ENCODE measurements at regions of chr17 and their contacts with region 1.

Region 1: GRCh38 chr17:20226814-20227482 is 217.8 kb downstream of the SPECC1 start:
- DNase-seq: peak; percentile 91
- ATAC-seq: peak; percentile 96
- H3K4me3 Mint-ChIP-seq: no peak overlapping the region
- H3K27ac Mint-ChIP-seq: peak overlapping the region; percentile 28
- H3K4me1 Mint-ChIP-seq: peaks cover 68% of the 10 kb centered on the region
- H3K27me3 Mint-ChIP-seq: no peaks in the 10 kb centered on the region
- CTCF ChIP-seq: peak; percentile 92

Region 2: GRCh38 chr17:20216154-20216815 is 10.7 kb before region 1 on chr17:
- CTCF ChIA-PET with region 1: interaction called, 15 read pairs
- POLR2A ChIA-PET with region 1: no interaction called
- DNase-seq: no peak
- ATAC-seq: peak; percentile 12
- H3K4me3 Mint-ChIP-seq: no peak overlapping the region
- H3K27ac Mint-ChIP-seq: peak overlapping the region; percentile 51
- H3K4me1 Mint-ChIP-seq: peaks cover 69% of the 10 kb centered on the region
- H3K27me3 Mint-ChIP-seq: no peaks in the 10 kb centered on the region; the same call in 1 of the 2 replicates
- CTCF ChIP-seq: no peak

Region 3: GRCh38 chr17:20262226-20263114 is 35.5 kb after region 1 on chr17:
- CTCF ChIA-PET with region 1: interaction called, 11 read pairs
- POLR2A ChIA-PET with region 1: no interaction called
- DNase-seq: no peak
- ATAC-seq: no peak
- H3K4me3 Mint-ChIP-seq: no peak overlapping the region
- H3K27ac Mint-ChIP-seq: peak overlapping the region; percentile 83
- H3K4me1 Mint-ChIP-seq: peaks cover 23% of the 10 kb centered on the region
- H3K27me3 Mint-ChIP-seq: no peaks in the 10 kb centered on the region
- CTCF ChIP-seq: no peak

Region 4: DNA sequence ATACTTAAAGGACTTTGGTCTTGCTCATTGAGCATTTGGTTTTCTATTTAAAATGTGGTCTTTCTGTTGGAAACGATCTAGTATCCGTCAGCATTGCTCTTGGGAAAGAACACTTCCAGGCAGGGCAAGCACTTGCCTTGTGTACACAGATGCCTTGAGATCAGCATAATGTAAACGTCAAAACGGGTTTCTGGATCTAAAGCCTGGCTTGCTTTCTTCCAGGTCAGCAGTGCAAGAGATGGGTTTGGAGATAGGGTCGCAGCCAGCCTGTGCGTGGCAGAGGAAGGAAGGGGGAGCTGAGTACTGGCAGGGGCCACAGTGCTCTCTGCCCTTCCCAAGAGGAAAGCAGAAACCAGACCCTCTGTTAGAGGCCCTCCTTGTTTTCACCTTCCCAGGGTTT is 64.9 kb after region 1 on chr17:
- CTCF ChIA-PET with region 1: no interaction called
- POLR2A ChIA-PET with region 1: no interaction called
- DNase-seq: no peak
- ATAC-seq: no peak
- H3K4me3 Mint-ChIP-seq: no peak overlapping the region
- H3K27ac Mint-ChIP-seq: no peak overlapping the region; the same call in 1 of the 2 replicates
- H3K4me1 Mint-ChIP-seq: no peaks in the 10 kb centered on the region
- H3K27me3 Mint-ChIP-seq: no peaks in the 10 kb centered on the region
- CTCF ChIP-seq: no peak